ENCODE measurements at regions of chr11 and their contacts with region 1.

Region 1: DNA sequence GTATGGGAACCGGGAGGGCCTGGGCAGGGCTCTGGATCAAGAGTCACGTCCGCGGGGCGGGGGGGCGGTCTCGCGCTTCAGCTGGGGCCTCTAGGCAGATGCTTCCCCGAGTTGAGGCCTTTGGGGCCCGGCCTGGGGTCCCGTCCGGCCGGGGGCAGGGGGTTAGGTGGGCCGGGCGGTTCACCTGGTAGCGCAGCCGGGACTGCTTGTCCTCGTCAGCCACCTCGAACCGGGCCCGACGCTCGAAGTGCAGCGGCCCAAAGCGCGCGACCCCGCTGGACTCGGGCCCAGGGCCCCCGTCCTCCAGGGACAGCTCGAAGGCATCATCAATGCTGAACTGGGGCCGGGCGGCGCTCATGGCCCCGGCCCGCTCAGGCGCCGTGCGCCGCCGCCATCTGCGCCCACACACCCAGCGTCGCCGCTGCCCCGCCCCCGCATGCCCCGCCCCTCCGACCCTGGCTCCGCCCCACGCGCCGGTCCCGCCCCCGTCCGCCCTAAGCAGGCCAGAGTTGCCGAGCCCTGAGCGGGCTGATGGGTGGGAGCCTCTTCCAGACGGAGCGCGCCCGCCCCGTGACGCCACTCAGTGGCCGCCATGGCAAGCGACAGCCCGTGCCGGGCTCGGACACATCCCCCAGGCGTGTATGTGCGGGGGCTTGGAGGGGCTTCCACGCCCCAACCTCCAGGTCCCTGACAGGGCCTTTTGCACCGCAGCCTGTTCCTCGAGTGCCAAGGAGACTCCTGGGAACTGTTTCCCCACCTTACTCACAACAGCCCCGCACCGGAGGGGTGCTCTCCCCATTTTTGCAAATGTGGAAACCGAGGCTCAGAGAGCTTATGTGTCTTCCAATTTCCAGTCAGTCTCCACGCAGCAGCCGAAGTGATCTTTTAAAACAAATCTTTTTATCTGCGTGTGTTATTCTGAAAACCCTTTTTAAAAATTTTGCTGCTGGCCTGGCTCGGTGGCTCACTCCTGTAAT is at the start of gene TMEM134:
- DNase-seq: peak; percentile 96
- CTCF ChIP-seq: peak; percentile 76

Region 2: DNA sequence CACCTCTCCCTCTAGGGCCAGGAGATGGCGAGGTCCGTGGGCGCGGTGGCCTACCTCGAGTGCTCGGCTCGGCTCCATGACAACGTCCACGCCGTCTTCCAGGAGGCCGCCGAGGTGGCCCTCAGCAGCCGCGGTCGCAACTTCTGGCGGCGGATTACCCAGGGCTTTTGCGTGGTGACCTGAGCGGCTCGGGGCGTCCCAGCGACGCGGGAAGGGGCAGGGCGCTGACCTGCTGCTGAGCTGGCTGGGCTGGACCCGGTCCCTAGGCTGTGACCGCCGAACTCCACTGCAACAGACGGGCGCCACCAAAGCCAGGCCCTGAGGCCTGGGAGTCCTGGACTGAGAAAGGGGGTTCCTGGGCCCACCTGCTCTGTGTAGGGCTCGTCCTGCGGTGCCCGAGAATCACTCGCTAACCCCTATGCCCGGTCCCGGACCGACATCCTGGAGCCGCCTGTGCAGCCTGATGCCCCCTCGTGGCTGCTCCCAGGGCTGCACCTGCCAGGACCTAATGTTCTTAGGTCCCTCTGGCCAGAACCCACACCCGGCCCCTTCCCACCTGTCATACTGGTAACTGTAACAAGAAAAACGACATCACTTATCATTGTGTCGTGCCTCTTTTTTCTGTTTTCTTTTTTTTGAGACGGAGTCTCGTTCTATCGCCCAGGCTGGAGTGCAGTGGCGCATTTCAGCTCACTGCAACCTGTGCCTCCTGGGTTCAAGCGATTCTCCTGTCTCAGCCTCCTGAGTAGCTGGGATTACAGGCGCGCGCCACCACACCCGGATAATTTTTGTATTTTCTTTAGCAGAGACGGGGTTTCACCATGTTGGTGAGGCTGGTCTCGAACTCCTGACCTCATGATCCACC is 397.5 kb before region 1 on chr11:
- CTCF ChIA-PET with region 1: no interaction called
- POLR2A ChIA-PET with region 1: no interaction called
- DNase-seq: peak; percentile 92
- CTCF ChIP-seq: peak; percentile 77

Region 3: DNA sequence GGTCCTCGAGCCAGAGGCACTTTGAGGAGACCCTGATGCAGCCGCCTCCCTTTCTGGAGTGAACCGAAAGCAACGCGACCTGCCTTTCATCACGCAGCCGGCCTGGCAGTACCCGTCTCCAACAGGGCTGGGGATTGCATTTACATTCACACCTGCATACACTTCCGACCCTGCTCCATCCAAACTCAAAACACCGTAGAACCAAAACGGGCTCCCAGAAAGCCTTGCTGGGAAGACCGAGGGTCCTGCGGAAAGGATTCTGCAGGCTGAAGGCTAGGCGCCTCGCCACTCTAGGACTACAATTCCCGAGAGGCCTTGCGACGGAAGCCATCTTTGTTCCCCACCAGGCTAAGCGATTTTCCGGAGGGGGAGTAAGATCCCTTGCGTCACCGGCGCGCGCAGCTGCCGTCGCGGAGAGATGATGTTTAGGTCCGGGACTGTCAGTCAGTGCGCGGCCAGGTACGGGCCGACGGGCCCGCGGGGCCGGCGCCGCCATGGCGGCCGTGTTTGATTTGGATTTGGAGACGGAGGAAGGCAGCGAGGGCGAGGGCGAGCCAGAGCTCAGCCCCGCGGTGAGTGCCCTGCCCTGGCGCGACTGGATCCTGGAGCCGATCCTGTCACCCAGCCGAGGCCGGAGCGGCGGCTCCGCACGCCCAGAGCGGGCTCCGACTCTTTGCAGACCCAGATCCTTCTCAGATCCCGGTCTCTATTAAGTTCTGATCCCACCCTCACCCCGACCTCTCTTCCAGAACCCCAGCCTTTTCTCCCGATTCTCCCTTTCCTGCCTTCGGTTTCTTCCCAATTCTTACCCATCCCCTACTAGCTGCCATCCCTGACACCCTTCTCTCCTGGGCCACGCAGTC is 40.8 kb before region 1 on chr11 and contains the start of gene RPS6KB2:
- CTCF ChIA-PET with region 1: no interaction called
- POLR2A ChIA-PET with region 1: no interaction called
- DNase-seq: peak; percentile 99
- CTCF ChIP-seq: no peak

Region 4: GRCh38 chr11:67482825-67483798 is 14.0 kb after region 1 on chr11 and contains the start of gene AIP:
- CTCF ChIA-PET with region 1: interaction called, 12 read pairs
- POLR2A ChIA-PET with region 1: interaction called, 5 read pairs
- DNase-seq: peak; percentile 94
- CTCF ChIP-seq: no peak

Region 5: DNA sequence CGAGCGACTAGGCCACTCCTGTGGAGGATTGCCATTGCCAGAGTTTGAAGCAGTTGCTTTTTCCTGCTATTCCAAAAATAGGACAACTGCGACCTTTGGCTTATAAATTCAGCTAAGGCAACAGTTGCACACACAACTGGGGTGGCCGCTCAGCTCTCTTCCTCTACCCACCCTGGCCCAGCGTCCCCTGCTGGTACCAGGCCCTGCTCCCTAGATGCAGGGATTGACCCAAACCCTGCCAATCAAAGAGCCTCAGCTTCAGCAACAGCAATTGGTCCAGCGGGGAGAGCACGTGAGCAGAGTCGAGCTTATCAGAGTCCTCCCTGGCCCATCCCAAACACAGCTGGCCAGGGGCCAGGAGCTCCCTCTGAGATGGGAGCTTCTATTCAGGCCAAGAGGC is 76.2 kb after region 1 on chr11:
- CTCF ChIA-PET with region 1: no interaction called
- POLR2A ChIA-PET with region 1: no interaction called
- DNase-seq: no peak
- CTCF ChIP-seq: no peak

Region 6: DNA sequence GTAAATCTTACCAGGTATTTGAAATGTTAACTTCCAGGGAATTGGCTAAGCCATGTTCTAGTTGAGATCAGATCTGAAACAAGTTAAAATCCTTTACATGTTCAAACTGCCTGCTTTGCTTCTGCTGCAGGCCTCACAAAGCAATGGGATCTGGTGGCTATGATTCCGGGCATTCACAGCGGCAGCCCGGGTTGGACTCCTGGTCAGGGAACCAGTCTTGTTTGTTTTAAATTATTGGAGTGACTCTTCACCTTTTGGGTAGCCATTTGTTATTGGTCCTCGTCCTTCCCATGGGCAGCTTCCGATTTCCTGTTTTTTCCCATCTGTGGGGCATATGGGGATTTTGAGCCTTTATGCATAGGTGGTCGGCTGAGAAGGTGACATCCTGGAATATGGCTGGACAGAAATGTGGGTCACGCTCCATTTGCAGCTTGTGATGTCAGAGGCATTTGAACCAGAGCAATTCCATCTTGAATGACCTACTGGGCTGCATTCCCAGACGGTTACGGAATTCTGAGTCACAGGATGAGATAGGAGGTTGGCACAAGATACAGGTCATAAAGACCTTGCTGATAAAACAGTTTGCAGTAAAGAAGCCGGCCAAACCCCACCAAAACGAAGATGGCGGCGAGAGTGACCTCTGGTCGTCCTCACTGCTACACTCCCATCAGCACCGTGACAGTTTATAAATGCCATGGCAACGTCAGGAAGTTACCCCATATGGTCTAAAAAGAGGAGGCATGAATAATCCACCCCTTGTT is 94.4 kb after region 1 on chr11:
- CTCF ChIA-PET with region 1: no interaction called
- POLR2A ChIA-PET with region 1: no interaction called
- DNase-seq: no peak
- CTCF ChIP-seq: no peak